WTC11 (cell line): ENCODE measurements at regions of chr1 and their contacts with region 1.

Region 1: DNA sequence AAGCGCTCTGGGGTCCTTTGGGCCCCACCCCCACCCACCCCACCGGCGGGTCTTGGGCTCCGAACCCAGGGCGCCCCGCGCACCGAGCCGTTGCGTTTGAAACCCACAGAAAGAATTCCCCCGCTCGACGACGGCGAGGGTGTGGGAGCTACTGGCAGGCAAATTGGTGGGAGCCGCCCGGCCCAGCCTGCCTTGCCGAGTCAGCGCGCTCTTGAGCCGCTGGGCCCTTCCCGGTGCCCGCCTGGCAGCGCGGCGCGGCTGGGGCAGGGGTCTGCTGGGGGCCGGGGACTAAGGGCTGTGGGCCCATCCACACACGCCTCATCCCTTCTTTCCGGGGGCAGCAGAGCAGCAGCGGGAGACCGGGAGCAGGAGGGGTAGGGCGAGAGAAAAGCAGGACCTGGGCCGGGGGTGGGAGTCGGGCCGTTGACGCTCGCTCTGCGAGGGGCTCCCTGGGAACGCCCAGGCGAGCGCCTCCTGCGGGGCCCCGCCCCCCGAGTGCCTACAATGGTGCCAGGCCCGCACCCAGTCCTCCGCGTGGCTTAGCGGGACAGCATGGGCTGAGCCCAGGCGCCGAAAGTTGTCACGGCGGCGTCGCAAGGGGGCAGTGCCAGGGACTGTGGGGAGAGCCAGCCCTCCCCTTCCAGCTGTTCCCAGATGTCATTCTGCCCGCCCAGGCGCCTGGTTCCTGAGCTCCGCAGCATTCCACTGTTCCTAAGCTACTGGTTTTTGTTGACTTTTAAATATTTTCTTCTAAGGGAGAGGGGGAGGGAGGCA is at the start of gene C1orf94:
- DNase-seq: peak; percentile 56
- ATAC-seq: peak; percentile 71
- H3K4me3 Mint-ChIP-seq: peak within 1 kb of the TSS; percentile 56
- H3K27ac Mint-ChIP-seq: no peak within 1 kb of the TSS
- H3K4me1 Mint-ChIP-seq: peaks cover 58% of the 10 kb centered on the region
- H3K27me3 Mint-ChIP-seq: peaks cover 15% of the 10 kb centered on the region
- CTCF ChIP-seq: no peak
- total RNA-seq, gene C1orf94: 5.5 to 6.0 TPM (median 5.5 TPM) in 3 replicates

Region 2: DNA sequence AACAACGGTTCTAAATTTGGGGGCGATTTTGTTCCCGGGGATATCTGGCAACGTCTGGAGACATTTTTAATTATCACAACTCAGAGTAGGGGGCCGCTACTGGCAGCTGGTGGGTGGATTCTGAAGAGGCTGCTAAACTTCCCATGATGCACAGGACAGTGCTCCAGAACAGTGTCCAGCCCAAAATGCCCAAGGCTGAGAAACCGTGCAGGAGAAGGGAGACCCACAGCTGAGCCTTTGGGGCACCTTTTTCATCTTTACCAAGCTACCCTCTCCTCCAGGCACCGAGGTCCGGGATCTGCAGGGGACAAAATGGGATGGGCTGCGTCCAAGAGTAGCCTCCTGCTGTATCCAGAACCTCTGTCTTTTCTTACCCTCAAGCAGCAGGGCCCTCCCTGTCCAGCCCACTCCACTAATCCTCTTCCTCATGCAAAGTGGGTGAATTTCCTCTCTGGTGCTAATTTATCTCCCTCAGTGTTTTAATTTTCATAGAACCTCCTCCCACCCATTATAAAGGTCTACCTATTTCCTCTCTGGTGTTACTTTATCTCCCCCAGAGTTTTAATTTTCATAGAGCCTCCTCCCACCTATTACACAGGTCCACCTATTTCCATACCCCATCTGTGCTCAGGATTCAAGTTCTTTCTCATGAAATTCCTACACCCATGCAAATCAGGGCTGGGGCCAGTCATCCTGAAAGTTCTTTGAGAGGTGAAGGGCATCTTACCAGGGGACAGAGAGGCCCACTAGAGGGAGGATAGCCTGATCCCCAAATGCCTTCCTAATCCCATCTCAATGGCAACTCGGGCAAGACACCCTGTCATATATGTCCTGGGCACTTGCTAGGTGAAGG is 54.7 kb before region 1 on chr1:
- CTCF ChIA-PET with region 1: no interaction called
- POLR2A ChIA-PET with region 1: no interaction called
- DNase-seq: no peak
- ATAC-seq: no peak
- H3K4me3 Mint-ChIP-seq: no peak overlapping the region
- H3K27ac Mint-ChIP-seq: no peak overlapping the region; the same call in 1 of the 2 replicates
- H3K4me1 Mint-ChIP-seq: peaks cover 6% of the 10 kb centered on the region; the same call in 1 of the 2 replicates
- H3K27me3 Mint-ChIP-seq: no peaks in the 10 kb centered on the region
- CTCF ChIP-seq: no peak

Region 3: DNA sequence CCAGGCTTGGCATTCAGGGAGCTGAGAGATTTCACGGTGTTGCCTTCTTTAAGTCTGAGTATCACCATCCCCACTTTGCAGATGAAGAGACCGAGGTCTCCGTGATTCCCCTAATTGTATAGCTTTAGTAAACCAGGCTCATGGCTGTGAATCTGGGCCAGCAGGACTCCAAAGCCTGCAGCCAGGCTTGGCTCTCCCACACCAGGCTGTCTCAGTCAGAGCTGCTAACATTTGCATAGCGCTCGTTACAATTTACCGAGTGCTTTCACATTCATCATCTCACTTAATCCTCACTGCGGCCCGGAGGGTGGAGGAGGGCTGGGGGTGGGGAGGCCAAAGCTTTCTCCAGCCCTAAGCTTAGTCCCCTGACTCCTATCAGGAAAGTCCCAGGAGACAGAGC is 11.4 kb after region 1 on chr1:
- CTCF ChIA-PET with region 1: interaction called, 33 read pairs
- POLR2A ChIA-PET with region 1: interaction called, 14 read pairs
- DNase-seq: peak; percentile 64
- ATAC-seq: peak; percentile 95
- H3K4me3 Mint-ChIP-seq: peak overlapping the region; percentile 6
- H3K27ac Mint-ChIP-seq: peak overlapping the region; percentile 60
- H3K4me1 Mint-ChIP-seq: peaks cover 67% of the 10 kb centered on the region
- H3K27me3 Mint-ChIP-seq: peaks cover 34% of the 10 kb centered on the region
- CTCF ChIP-seq: no peak